ENCODE measurements at regions of chr1 and their contacts with region 1.

Region 1: GRCh38 chr1:1144122-1144842 is 28.4 kb upstream of the C1orf159 start:
- DNase-seq: peak; percentile 67
- H3K4me3 Mint-ChIP-seq: peak overlapping the region; percentile 37
- H3K27ac Mint-ChIP-seq: peak overlapping the region; percentile 97
- H3K4me1 Mint-ChIP-seq: peaks cover 9% of the 10 kb centered on the region
- H3K27me3 Mint-ChIP-seq: no peaks in the 10 kb centered on the region

Region 2: DNA sequence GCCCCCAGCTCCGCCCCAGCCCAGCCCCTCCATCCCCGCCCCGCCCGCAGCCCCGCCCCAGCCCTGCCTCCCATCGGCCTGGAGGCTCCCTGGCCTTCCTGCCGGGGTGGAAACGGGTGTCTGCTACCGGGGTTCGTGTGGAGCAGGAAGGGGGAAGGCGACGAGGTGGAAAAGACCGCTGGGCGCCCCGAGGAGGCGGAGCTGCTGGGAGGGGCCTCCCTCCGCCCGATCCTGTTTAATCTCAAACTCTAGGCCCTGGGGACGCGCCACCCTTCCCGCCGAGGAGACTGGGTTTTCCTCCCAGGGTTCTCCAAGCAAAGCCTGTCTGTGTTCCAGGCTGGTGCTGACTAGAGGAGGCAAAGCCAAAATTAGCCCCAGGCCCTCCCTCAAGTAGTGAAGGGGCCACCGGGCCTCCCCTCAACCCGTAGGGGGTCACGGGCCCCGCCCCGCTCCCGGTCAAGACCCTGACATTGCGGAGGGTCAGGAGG is 13.2 kb after region 1 on chr1:
- intact Hi-C with region 1: loop called (anchors 1 kb)
- DNase-seq: peak; percentile 59
- H3K4me3 Mint-ChIP-seq: peak overlapping the region; percentile 71
- H3K27ac Mint-ChIP-seq: peak overlapping the region; percentile 67
- H3K4me1 Mint-ChIP-seq: peaks cover 5% of the 10 kb centered on the region
- H3K27me3 Mint-ChIP-seq: no peaks in the 10 kb centered on the region

Region 3: DNA sequence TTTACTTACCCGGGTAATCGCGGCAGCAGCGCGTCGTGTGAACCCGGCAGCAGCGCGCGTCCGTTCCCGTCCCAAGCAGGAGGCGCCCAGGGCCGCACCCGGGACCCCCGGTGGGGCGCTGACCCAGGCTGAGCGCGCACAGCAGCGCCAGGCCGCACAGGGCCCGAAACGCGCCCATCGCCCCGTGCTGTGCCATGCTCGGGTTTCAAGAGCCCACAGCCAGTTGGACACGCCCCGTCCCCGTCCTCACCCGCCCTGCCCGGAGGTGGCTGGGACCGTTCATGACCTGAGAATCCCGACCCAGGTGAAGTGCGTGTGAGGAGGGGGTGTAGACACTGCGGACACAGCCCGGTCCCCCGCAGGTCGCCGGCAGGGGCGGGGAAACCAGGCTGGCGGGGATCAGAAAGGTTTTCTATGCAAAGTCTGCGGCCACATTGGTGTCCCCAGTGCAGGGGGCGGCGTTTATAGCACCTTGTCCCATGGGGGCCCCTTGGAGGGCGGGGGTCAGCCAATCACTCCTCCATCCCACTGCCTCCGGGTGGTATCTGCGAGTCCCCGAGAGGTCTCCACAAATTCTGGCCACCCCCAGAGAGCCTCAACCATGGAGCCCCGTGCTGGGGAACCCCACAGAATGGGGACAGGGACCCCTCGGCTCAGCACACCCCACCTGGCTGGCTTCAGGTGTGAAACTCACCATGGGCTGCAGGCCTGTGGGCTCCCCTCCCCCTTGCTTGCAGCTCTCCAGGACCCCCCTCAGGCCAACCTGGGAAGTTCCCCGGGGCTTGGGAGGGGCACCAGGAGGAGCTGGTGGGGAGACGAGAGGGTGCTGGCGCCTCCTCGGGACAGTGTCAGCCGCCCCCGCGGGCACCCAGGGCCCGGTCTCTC is 62.3 kb after region 1 on chr1 and contains the start of gene TNFRSF18:
- intact Hi-C with region 1: loop called (anchors 5 kb)
- DNase-seq: peak; percentile 47
- H3K4me3 Mint-ChIP-seq: peak within 1 kb of the TSS; percentile 86
- H3K27ac Mint-ChIP-seq: peak within 1 kb of the TSS; percentile 99
- H3K4me1 Mint-ChIP-seq: peaks cover 24% of the 10 kb centered on the region
- H3K27me3 Mint-ChIP-seq: no peaks in the 10 kb centered on the region
- total RNA-seq, gene TNFRSF18: 350 and 356 TPM in 2 replicates

Region 4: GRCh38 chr1:1305300-1306069 is 161.2 kb after region 1 on chr1:
- intact Hi-C with region 1: no loop called
- DNase-seq: peak; percentile 60
- H3K4me3 Mint-ChIP-seq: peak overlapping the region; percentile 88
- H3K27ac Mint-ChIP-seq: peak overlapping the region; percentile 85
- H3K4me1 Mint-ChIP-seq: peaks cover 15% of the 10 kb centered on the region
- H3K27me3 Mint-ChIP-seq: no peaks in the 10 kb centered on the region

Measured in activated T-helper 1 cell treated with anti-CD3 and anti-CD28 coated beads, Interleukin-12 subunit alpha, Interleukin-12 subunit beta, Interleukin-2, Interleukin-4 antibody, amounts not matched to agents 30 ng/mL and 10 ng/mL and 1 ng/mL, durations not matched to agents 14 hours and 24 hours and 36 hours (primary cell).